Left cardiac atrium (tissue), 4 donors: ENCODE measurements at regions of chr1 and their contacts with region 1.

Region 1: GRCh38 chr1:247390116-247390791 is 25.7 kb upstream of the NLRP3 start:
- DNase-seq: peak; percentile 79
- ATAC-seq: peak; percentile 93 to 95

Region 2: DNA sequence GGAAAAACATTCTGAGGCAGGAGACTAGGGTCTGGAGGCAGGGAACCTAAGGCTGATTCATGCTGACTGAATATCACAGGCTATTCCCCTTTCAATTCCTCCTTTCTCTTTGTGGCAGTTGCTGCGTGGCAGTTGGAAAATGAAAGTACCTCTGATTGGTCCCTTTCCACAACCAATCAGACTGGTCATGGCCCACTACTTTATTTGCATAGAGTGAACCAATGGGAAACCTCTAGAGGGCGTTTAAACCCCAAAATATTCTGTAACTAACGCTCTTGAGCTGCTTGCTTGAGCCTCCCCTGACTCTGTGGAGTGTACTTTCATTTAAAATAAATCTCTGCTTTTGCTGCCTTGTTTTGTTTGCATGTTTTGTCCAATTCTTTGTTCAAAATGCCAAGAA is 162.1 kb before region 1 on chr1:
- intact Hi-C with region 1: no loop called
- DNase-seq: no peak
- ATAC-seq: no peak

Region 3: GRCh38 chr1:247487057-247487456 is 96.8 kb after region 1 on chr1:
- intact Hi-C with region 1: loop called in 1 of 2 experiments (anchors 5 kb)
- DNase-seq: no peak
- ATAC-seq: peak; percentile 65 to 85